Astrocyte of the cerebellum (primary cell): ENCODE measurements at regions of chr6 and their contacts with region 1.

Region 1: GRCh38 chr6:36765594-36766398 is 68.2 kb downstream of the RAB44 start:
- DNase-seq: peak; percentile 66
- H3K4me3 ChIP-seq: no peak overlapping the region
- CTCF ChIP-seq: peak; percentile 94

Region 2: DNA sequence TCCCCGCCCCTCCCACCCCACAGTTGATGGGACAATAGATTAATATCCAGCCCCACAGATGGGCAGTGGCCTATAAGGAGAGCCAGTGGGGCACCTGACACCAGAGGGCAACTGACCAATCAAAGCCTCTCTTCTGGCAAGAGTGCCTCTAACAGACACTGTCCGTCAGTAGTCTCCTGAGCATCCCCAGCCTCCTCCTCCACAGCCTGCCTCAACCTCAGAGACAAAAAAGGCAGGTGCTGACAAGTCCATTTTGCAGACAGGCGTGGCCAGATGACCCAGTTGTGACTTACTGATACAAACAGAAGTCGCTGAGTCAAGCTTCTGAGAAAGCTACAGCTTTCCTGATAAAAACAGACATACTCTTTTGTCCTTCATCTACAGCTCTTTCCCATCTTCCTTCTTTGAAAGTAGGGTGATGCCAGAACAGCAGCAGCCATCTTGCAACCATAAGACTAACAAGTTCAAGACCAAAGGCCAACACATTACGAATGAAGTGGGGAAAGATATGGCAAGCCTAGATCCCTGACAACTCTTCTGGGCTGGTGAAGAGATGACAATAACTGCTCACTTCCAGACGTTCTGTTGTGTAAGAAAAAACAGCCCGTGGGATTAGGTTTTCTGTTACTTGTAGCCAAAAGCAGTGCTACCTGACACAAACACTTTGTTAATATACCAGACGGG is 96.5 kb after region 1 on chr6:
- in situ Hi-C with region 1: loop called (anchors 5 kb)
- DNase-seq: no peak
- H3K4me3 ChIP-seq: no peak overlapping the region
- CTCF ChIP-seq: no peak

Region 3: GRCh38 chr6:37018198-37019064 is 252.6 kb after region 1 on chr6:
- in situ Hi-C with region 1: loop called (anchors 10 kb)
- DNase-seq: peak; percentile 79
- H3K4me3 ChIP-seq: no peak overlapping the region
- CTCF ChIP-seq: peak; percentile 94